ENCODE measurements at regions of chr5 and their contacts with region 1.

Region 1: GRCh38 chr5:147453875-147454814 is 55.7 kb downstream of the DPYSL3 start:
- DNase-seq: peak; percentile 94 to 98
- ATAC-seq: peak; percentile 92
- H3K4me3 ChIP-seq: peak overlapping the region; percentile 90 to 94
- H3K27ac ChIP-seq: peak overlapping the region; percentile 91 to 95
- H3K4me1 ChIP-seq: peaks cover 2% of the 10 kb centered on the region in 2 donors
- H3K27me3 ChIP-seq: no peaks in the 10 kb centered on the region

Region 2: GRCh38 chr5:147234825-147235635 is 219.1 kb before region 1 on chr5 and contains the start of gene STK32A:
- intact Hi-C with region 1: loop called (anchors 2 to 10 kb)
- DNase-seq: peak; percentile 88 to 91
- ATAC-seq: peak; percentile 93
- H3K4me3 ChIP-seq: peak within 1 kb of the TSS; percentile 61 to 65
- H3K27ac ChIP-seq: peak within 1 kb of the TSS; percentile 16 to 90
- H3K4me1 ChIP-seq: peaks cover 0 to 1% of the 10 kb centered on the region in 2 donors
- H3K27me3 ChIP-seq: no peaks in the 10 kb centered on the region
- total RNA-seq, gene STK32A: 6.4 to 14.5 TPM

Region 3: GRCh38 chr5:147403651-147404640 is 50.2 kb before region 1 on chr5:
- intact Hi-C with region 1: loop called in 1 of 2 experiments (anchors 2 kb)
- DNase-seq: peak; percentile 83 to 86
- ATAC-seq: peak; percentile 88
- H3K4me3 ChIP-seq: no peak overlapping the region
- H3K27ac ChIP-seq: peak overlapping the region; percentile 95 to 100
- H3K4me1 ChIP-seq: peaks cover 2 to 7% of the 10 kb centered on the region in 2 donors
- H3K27me3 ChIP-seq: no peaks in the 10 kb centered on the region

Region 4: DNA sequence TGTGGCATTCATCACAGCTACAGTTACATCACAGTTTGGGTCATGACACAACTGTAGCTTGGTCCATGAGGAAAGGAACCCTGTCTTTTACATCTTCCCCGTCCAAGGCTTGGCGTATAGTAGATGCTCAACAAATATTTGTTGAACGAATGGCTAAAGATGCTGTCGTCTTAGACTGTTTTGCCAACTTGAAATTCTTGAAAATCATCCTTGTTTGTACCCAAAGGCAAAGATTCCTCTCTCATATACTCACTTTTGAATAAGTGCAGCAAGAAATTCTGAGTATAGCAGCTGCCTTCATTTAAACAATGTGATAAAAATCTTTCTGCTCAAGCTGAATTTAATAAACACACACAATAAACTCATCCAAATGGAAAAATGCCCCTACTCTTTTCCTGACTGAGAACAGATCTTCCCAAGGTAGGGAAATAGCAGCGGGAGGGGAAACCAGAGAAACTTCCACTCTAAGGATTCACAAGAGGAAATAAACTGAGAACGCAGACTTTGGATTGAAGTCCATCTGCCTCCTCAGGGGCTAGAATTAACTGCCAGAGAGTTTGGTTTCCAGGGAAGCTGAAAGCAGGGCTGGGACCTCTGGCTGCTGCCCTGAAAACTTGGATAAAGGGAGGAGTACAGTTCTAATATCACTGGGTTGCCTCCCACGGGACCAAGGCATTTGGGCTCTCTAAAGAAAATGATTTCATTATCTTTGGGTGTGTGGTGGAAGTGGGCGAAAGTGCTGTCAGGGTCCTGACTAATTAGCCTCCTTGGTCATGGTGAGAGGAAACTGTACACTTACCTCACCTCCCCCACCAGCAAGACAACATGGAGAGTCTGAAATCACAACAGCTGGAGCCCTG is 43.4 kb before region 1 on chr5:
- intact Hi-C with region 1: loop called (anchors 2 to 5 kb)
- DNase-seq: no peak
- ATAC-seq: peak; percentile 17
- H3K4me3 ChIP-seq: no peak overlapping the region
- H3K27ac ChIP-seq: peak overlapping the region; percentile 95 to 99
- H3K4me1 ChIP-seq: peaks cover 5 to 34% of the 10 kb centered on the region in 2 donors
- H3K27me3 ChIP-seq: no peaks in the 10 kb centered on the region

Region 5: GRCh38 chr5:147417135-147417813 is 36.9 kb before region 1 on chr5:
- intact Hi-C with region 1: loop called (anchors 5 kb)
- DNase-seq: peak; percentile 76 to 84
- ATAC-seq: peak; percentile 86
- H3K4me3 ChIP-seq: no peak overlapping the region
- H3K27ac ChIP-seq: peak overlapping the region; percentile 94 to 97
- H3K4me1 ChIP-seq: peaks cover 2 to 19% of the 10 kb centered on the region in 2 donors
- H3K27me3 ChIP-seq: no peaks in the 10 kb centered on the region

Region 6: GRCh38 chr5:147509710-147510651 is 55.8 kb after region 1 on chr5 and contains the start of gene DPYSL3:
- intact Hi-C with region 1: loop called (anchors 2 to 10 kb)
- DNase-seq: peak; percentile 86 to 94
- ATAC-seq: peak; percentile 94
- H3K4me3 ChIP-seq: peak within 1 kb of the TSS; percentile 60 to 70
- H3K27ac ChIP-seq: peak within 1 kb of the TSS in 1 of 2 donors; percentile 65
- H3K4me1 ChIP-seq: peaks cover 0 to 2% of the 10 kb centered on the region in 2 donors
- H3K27me3 ChIP-seq: no peaks in the 10 kb centered on the region
- total RNA-seq, gene DPYSL3: 288 to 344 TPM

Region 7: GRCh38 chr5:147567917-147568598 is 113.9 kb after region 1 on chr5:
- intact Hi-C with region 1: no loop called
- DNase-seq: no peak
- ATAC-seq: no peak
- H3K4me3 ChIP-seq: no peak overlapping the region
- H3K27ac ChIP-seq: no peak overlapping the region
- H3K4me1 ChIP-seq: no peaks in the 10 kb centered on the region
- H3K27me3 ChIP-seq: no peaks in the 10 kb centered on the region

Measured in aorta (tissue), 5 donors.